ENCODE measurements at regions of chr10 and their contacts with region 1.

Region 1: GRCh38 chr10:90751107-90751997 is 106.5 kb downstream of the HTR7 start:
- DNase-seq: no peak
- H3K4me3 ChIP-seq: no peak overlapping the region
- H3K27ac ChIP-seq: no peak overlapping the region
- H3K4me1 ChIP-seq: no peaks in the 10 kb centered on the region
- H3K27me3 ChIP-seq: peaks cover 0 to 21% (median 0%) of the 10 kb centered on the region in 4 donors
- CTCF ChIP-seq: peak; percentile 55 to 63 (median 56)
- EP300 ChIP-seq: no peak
- POLR2A ChIP-seq: no peak

Region 2: GRCh38 chr10:90871766-90872647 is 120.7 kb after region 1 on chr10 and contains the start of gene RPP30:
- intact Hi-C with region 1: loop called (anchors 2 kb)
- DNase-seq: no peak
- H3K4me3 ChIP-seq: peak within 1 kb of the TSS; percentile 74 to 93 (median 86)
- H3K27ac ChIP-seq: peak within 1 kb of the TSS; percentile 69 to 75 (median 75)
- H3K4me1 ChIP-seq: peaks cover 10 to 28% (median 21%) of the 10 kb centered on the region in 4 donors
- H3K27me3 ChIP-seq: peaks cover 0 to 16% (median 0%) of the 10 kb centered on the region in 4 donors
- CTCF ChIP-seq: peak in 1 of 3 experiments; percentile 29
- EP300 ChIP-seq: no peak
- POLR2A ChIP-seq: no peak
- total RNA-seq, gene RPP30: 21.6 to 31.8 (median 25.7) TPM